ENCODE measurements at regions of chr18 and their contacts with region 1.

Region 1: DNA sequence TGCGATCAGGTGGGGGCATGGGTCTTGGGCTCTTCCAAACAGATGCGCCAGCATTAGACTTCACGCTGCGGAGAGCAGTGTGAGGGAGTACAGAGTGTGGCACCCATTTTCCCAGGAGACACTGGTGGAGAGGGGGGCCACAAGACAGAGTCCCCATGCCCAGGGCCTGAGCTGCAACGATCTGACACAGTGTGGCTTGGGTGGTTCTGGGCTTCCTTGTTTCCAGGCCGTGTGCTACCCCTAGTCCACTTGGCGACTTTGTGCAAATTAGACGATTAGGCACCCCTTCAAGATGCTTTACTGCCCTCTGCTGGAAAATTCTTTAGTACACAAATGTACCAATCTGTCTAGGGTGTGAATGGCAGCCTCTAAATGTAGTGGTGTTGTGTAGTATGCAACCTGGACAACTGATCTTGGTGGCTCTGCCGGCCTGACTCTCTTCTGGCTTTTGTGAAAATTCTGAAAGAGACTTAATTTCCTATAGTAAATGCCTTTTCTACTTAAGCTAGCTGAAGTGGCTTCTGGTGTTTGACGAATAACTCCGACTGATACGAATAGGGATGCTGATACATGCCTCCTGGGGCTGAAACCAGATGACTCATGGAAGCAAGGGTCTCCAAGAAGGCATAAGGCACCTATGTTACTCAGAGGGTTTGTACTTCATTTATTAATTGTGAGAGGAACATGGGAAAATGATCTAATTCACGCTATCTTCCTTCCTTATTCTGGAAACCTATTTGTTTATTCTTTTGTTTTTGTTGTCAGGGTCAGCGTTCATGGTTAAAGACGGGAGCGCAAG is 92.3 kb upstream of the SMAD2 start:
- DNase-seq: peak; percentile 55
- H3K4me3 Mint-ChIP-seq: no peak overlapping the region
- H3K27ac Mint-ChIP-seq: no peak overlapping the region
- H3K4me1 Mint-ChIP-seq: peaks cover 14% of the 10 kb centered on the region
- H3K27me3 Mint-ChIP-seq: peaks cover 58% of the 10 kb centered on the region
- CTCF ChIP-seq: peak; percentile 66

Region 2: GRCh38 chr18:47772374-47773248 is 250.1 kb before region 1 on chr18:
- CTCF ChIA-PET with region 1: interaction called, 4 read pairs
- intact Hi-C with region 1: loop called (anchors 1 kb)
- DNase-seq: peak; percentile 92
- H3K4me3 Mint-ChIP-seq: no peak overlapping the region
- H3K27ac Mint-ChIP-seq: no peak overlapping the region
- H3K4me1 Mint-ChIP-seq: peaks cover 6% of the 10 kb centered on the region
- H3K27me3 Mint-ChIP-seq: peaks cover 67% of the 10 kb centered on the region
- CTCF ChIP-seq: peak; percentile 88

Region 3: GRCh38 chr18:47979611-47980200 is 43.0 kb before region 1 on chr18:
- CTCF ChIA-PET with region 1: no interaction called
- intact Hi-C with region 1: no loop called
- DNase-seq: peak; percentile 36
- H3K4me3 Mint-ChIP-seq: no peak overlapping the region
- H3K27ac Mint-ChIP-seq: no peak overlapping the region
- H3K4me1 Mint-ChIP-seq: peaks cover 12% of the 10 kb centered on the region
- H3K27me3 Mint-ChIP-seq: peaks cover 9% of the 10 kb centered on the region
- CTCF ChIP-seq: no peak